ENCODE measurements at regions of chr20 and their contacts with region 1.

Region 1: DNA sequence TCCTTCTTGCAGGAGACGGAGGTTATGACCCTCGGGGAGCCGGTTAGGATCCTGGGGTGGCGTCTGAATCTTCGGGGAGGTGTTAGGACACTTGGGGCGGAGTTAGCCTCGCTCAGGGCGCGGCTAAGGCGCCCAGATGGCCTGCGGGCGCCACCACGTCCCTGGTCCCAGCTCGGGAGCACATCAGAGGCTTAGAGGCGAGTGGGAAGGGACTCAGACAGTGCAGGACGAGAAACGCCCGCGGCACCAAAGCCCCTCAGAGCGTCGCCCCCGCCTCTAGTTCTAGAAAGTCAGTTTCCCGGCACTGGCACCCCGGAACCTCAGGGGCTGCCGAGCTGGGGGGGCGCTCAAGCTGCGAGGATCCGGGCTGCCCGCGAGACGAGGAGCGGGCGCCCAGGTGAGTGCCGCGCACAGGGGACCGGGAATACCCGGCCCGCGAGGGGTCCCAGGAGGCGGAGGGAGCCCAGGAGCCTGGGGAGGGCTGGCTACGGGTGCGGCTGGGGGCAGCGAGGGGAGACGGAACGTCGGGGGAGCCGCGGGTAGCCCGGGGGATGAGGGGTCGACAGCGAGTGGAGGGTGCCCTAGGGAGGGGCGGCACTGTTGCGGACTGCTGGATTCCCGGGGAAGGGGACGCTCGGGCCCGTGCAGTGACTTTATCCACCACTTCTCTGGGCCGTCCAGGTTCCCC is at the start of gene HCK:
- DNase-seq: peak; percentile 74 to 84 (median 81)
- H3K4me3 ChIP-seq: peak within 1 kb of the TSS; percentile 69 to 98 (median 81)
- H3K4me3 Mint-ChIP-seq: peak within 1 kb of the TSS; percentile 95 to 97
- H3K27ac ChIP-seq: peak within 1 kb of the TSS; percentile 90 to 98
- H3K27ac Mint-ChIP-seq: peak within 1 kb of the TSS; percentile 98 to 99 (median 98)
- H3K4me1 ChIP-seq: peaks cover 51 to 64% of the 10 kb centered on the region in 2 donors
- H3K4me1 Mint-ChIP-seq: peaks cover 54% of the 10 kb centered on the region
- H3K27me3 ChIP-seq: no peaks in the 10 kb centered on the region
- H3K27me3 Mint-ChIP-seq: peaks cover 0 to 2% (median 0%) of the 10 kb centered on the region in 3 donors
- CTCF ChIP-seq: no peak
- polyA plus RNA-seq, gene HCK: 430 to 688 (median 526) TPM

Region 2: GRCh38 chr20:31879143-31879987 is 172.9 kb before region 1 on chr20:
- intact Hi-C with region 1: no loop called
- DNase-seq: peak; percentile 92 to 97 (median 96)
- H3K4me3 ChIP-seq: peak overlapping the region; percentile 45 to 74 (median 49)
- H3K4me3 Mint-ChIP-seq: peak overlapping the region; percentile 92 to 96
- H3K27ac ChIP-seq: peak overlapping the region in 1 of 2 donors; percentile 57
- H3K27ac Mint-ChIP-seq: peak overlapping the region; percentile 76 to 95 (median 94)
- H3K4me1 ChIP-seq: peaks cover 8 to 14% of the 10 kb centered on the region in 2 donors
- H3K4me1 Mint-ChIP-seq: peaks cover 17% of the 10 kb centered on the region
- H3K27me3 ChIP-seq: no peaks in the 10 kb centered on the region
- H3K27me3 Mint-ChIP-seq: peaks cover 4 to 6% (median 4%) of the 10 kb centered on the region in 3 donors
- CTCF ChIP-seq: no peak

Region 3: GRCh38 chr20:32037929-32038328 is 14.3 kb before region 1 on chr20:
- intact Hi-C with region 1: loop called in 1 of 2 experiments (anchors 2 kb)
- DNase-seq: no peak
- H3K4me3 ChIP-seq: no peak overlapping the region
- H3K4me3 Mint-ChIP-seq: no peak overlapping the region
- H3K27ac ChIP-seq: peak overlapping the region; percentile 55 to 94
- H3K27ac Mint-ChIP-seq: peak overlapping the region; percentile 66 to 99 (median 83)
- H3K4me1 ChIP-seq: peaks cover 99 to 100% of the 10 kb centered on the region in 2 donors
- H3K4me1 Mint-ChIP-seq: peaks cover 95% of the 10 kb centered on the region
- H3K27me3 ChIP-seq: no peaks in the 10 kb centered on the region
- H3K27me3 Mint-ChIP-seq: peaks cover 0 to 2% (median 2%) of the 10 kb centered on the region in 3 donors
- CTCF ChIP-seq: no peak

Region 4: GRCh38 chr20:32062776-32063170 is 10.5 kb after region 1 on chr20:
- intact Hi-C with region 1: loop called (anchors 2 kb)
- DNase-seq: peak; percentile 95 to 97 (median 97)
- H3K4me3 ChIP-seq: peak overlapping the region; percentile 33 to 72 (median 34)
- H3K4me3 Mint-ChIP-seq: peak overlapping the region; percentile 76 to 94
- H3K27ac ChIP-seq: peak overlapping the region; percentile 91 to 94
- H3K27ac Mint-ChIP-seq: peak overlapping the region; percentile 97 to 100 (median 99)
- H3K4me1 ChIP-seq: peaks cover 98 to 100% of the 10 kb centered on the region in 2 donors
- H3K4me1 Mint-ChIP-seq: peaks cover 96% of the 10 kb centered on the region
- H3K27me3 ChIP-seq: no peaks in the 10 kb centered on the region
- H3K27me3 Mint-ChIP-seq: no peaks in the 10 kb centered on the region
- CTCF ChIP-seq: no peak

Region 5: DNA sequence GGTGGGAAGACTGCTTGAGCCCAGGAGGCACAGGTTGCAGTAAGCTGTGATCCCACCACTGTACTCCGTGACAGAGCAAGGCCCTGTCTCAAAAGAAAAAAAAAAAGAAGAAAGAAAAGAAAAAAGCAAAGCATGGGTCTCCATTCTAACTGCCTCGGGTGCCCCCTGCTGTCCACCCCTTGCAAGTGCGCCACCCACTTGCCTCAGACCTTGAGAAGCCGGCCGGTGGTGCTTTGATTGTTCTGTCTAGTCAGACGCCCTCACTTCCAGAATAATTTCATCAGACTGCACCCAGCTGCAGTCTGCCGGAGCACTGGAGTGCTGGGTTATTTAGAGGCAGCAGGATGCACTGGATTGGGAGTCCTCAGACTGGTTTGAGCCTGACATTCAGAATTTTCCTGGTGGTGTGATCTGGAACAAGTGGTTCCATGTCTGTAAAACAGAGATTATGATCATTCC is 39.7 kb after region 1 on chr20:
- intact Hi-C with region 1: no loop called
- DNase-seq: peak; percentile 63 to 77 (median 76)
- H3K4me3 ChIP-seq: no peak overlapping the region
- H3K4me3 Mint-ChIP-seq: no peak overlapping the region
- H3K27ac ChIP-seq: peak overlapping the region in 1 of 2 donors; percentile 64
- H3K27ac Mint-ChIP-seq: peak overlapping the region in 5 of 7 donors; percentile 60 to 84 (median 65)
- H3K4me1 ChIP-seq: peaks cover 0 to 11% of the 10 kb centered on the region in 2 donors
- H3K4me1 Mint-ChIP-seq: peaks cover 15% of the 10 kb centered on the region
- H3K27me3 ChIP-seq: no peaks in the 10 kb centered on the region
- H3K27me3 Mint-ChIP-seq: peaks cover 0 to 1% (median under 1%) of the 10 kb centered on the region in 3 donors
- CTCF ChIP-seq: peak; percentile 97